Astrocyte of the cerebellum (primary cell): ENCODE measurements at regions of chr11 and their contacts with region 1.

Region 1: GRCh38 chr11:123103326-123103980 is 41.5 kb upstream of the HSPA8 start:
- DNase-seq: peak; percentile 61
- H3K4me3 ChIP-seq: no peak overlapping the region
- CTCF ChIP-seq: peak; percentile 75

Region 2: DNA sequence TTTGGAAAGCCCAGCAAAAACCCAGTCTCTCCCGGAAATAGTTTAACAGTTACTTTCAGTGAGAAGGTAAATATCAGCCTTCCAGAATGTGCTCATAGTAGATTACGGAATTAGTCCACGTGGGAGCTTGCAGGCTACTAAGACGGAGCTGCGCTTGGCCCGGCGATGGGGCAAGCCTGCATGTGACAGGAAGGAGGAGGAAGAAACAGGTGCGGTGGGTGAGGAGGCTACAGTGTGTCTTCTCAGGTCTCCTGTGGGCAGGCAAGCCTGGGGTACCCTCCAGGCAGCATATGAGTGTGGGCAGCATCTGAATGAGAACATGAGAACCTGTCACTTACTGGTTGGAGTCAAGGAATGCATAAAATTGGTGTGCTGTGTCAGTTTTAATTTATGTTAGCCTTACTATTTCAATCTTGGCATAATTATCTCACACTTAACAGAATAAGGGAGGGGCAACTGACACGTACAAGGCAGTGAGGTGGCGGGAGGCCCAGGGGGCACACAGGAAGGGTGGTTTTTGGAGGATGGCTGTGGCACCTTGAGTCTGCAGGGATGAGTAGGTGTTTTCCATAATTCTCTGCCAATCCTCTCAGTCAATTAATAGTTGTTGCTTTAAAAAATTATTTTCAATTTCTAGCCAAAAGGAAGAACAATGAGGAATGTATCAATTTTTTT is 55.9 kb after region 1 on chr11:
- in situ Hi-C with region 1: no loop called
- DNase-seq: no peak
- H3K4me3 ChIP-seq: no peak overlapping the region
- CTCF ChIP-seq: no peak

Region 3: GRCh38 chr11:123261345-123262106 is 158.1 kb after region 1 on chr11:
- in situ Hi-C with region 1: loop called (anchors 5 kb)
- DNase-seq: no peak
- H3K4me3 ChIP-seq: no peak overlapping the region
- CTCF ChIP-seq: peak; percentile 97

Region 4: GRCh38 chr11:123461164-123461563 is 357.7 kb after region 1 on chr11:
- in situ Hi-C with region 1: loop called (anchors 10 kb)
- DNase-seq: no peak
- H3K4me3 ChIP-seq: no peak overlapping the region
- CTCF ChIP-seq: no peak